ENCODE measurements at regions of chr16 and their contacts with region 1.

Region 1: DNA sequence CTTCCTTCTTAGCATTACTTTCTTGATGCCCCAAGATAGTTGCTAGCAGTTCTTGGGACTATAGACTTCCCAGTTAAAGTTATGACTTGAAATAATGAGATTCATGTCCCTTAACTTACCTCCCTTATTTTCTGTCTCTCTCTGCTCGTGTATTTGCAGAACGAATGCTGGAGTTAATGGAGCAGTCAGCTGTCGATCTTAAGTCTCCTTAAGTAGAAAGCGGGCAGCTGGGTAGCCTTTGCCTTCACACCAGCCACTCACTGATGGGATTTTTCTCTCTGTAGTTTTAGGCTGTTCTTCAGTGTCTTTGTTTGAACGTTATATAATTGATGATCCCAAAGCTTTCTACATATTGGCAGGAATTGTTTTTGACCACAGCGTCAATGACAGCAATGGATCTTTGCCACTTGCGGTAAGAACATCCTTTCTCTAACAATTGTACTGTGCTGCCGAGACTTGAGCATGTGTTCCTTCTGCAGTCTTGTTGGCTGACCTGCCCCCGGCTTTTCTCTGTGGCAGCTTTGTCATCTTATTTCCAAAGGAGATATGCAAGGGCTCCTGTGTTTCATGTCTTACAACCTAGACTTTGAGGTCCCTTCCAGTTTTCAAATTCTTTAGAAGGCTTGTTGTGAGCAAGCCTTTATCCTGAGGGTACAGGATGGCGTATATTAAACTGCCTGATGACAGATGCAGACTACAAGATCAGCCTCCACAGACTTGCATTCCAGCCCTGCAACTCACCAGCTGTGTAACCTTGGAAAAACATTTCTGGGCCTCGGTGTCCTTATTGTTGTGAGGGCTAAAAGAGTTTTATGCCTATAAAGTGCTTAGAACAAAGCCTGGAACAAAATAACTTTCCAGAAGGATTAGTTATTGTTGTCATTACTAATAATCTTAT is 25.1 kb upstream of the ABCA3 start:
- DNase-seq: no peak
- ATAC-seq: peak in 2 of 4 donors; percentile 50 to 71
- H3K4me3 ChIP-seq: no peak overlapping the region
- H3K27ac ChIP-seq: peak overlapping the region in 2 of 12 donors; percentile 29 to 38
- H3K4me1 ChIP-seq: peaks cover 0 to 19% (median 7%) of the 10 kb centered on the region in 12 donors
- H3K27me3 ChIP-seq: no peaks in the 10 kb centered on the region
- CTCF ChIP-seq: no peak
- POLR2A ChIP-seq: no peak

Region 2: DNA sequence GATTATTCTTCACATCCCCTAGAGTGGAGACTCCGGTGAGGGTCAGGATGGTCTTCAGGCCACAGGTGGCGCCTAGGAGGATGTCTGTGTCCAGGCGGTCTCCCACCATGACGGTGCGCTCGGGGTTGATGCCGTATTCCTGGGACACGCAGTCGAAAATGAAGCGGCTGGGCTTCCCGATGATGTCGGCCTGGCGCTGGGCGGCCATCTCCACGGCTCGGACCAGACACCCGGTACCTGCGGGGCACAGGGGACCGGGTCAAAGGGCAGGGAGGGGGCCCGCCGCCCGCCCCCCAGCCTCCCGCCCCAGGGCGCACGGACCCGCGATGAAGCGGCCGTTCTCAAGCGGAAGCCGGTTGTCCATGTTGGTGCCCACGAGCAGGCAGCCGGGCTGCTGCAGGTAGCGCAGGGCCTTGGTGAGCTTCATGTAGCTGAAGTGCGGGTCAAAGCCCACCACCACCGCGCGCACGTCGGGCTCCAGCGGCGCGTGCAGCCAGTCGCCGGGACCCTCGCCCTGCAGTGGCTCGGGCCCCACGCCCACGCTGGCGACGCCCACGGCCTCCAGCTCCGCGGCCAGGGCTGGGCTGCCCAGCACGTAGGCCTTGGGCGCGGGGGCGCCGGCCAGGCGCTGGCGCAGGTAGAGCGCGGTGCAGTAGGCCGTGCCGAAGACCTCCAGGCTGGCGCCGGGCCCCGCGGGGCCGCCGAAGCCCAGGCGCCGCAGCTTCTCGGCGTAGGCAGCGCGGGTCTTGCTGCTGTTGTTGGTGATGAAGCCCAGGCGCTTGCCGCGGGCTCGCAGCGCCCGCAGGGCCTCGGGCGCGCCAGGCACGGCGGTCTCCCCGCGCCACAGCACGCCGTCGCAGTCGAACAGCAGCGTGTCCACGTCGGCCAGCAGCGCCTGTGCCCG is 151.6 kb before region 1 on chr16:
- intact Hi-C with region 1: no loop called
- DNase-seq: no peak
- ATAC-seq: no peak
- H3K4me3 ChIP-seq: peak overlapping the region; percentile 64 to 99 (median 88)
- H3K27ac ChIP-seq: peak overlapping the region; percentile 27 to 94 (median 88)
- H3K4me1 ChIP-seq: peaks cover 14 to 52% (median 29%) of the 10 kb centered on the region in 12 donors
- H3K27me3 ChIP-seq: no peaks in the 10 kb centered on the region
- CTCF ChIP-seq: no peak
- POLR2A ChIP-seq: no peak

Region 3: DNA sequence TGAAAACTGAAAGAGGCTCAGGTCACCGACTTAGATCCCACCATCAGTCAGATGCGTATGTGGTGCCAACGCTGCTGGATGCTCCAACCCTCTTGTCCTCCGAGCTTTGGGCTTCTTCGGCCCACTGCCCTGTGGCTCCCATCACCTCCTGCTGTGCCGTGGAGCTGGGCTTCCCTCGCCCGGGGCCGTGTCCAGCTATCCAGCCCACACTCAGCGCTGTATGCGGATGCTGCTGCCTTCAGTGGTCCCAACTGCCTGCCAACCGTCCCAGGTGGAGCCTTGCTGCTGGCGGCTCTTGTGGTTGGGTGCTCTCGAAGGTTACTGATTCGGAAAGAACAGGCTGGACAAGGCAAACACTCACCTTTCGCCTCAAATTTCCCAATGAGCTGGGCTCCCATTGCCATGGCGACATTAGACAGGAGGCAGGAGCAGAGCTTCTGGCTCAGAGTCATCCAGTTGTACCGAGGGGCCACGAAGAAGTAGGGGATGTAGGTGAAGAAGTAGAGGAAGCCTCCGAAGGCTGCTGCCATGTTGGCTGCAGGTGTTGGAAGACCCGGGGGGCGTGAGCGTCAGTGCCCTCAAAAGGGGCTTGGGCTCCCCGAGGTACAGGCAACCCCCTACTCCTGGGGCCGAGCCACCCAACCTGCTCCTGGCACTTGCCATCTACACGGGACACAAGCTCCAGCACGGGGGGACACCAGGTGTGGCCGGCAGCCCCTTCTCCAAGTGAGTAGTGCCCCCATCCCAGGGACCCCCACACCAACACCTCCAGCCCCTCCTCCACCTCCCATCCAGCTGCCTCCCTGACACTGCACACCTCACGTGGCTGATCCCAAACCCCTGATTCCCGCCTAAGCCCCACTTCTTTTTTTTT is 57.3 kb before region 1 on chr16:
- intact Hi-C with region 1: loop called in 1 of 10 experiments (anchors 10 kb)
- DNase-seq: no peak
- ATAC-seq: no peak
- H3K4me3 ChIP-seq: no peak overlapping the region
- H3K27ac ChIP-seq: no peak overlapping the region
- H3K4me1 ChIP-seq: no peaks in the 10 kb centered on the region
- H3K27me3 ChIP-seq: no peaks in the 10 kb centered on the region
- CTCF ChIP-seq: no peak
- POLR2A ChIP-seq: no peak

Measured in heart left ventricle (tissue), 16 donors.